GM13977 (cell line): ENCODE measurements at regions of chr20 and their contacts with region 1.

Region 1: GRCh38 chr20:4607287-4607713 is 114.4 kb upstream of the PRND start:
- DNase-seq: peak; percentile 62
- CTCF ChIP-seq: peak; percentile 78

Region 2: GRCh38 chr20:4956200-4956810 is 349.0 kb after region 1 on chr20:
- in situ Hi-C with region 1: loop called (anchors 25 kb)
- DNase-seq: peak; percentile 41
- CTCF ChIP-seq: peak; percentile 55

Region 3: GRCh38 chr20:5078399-5078958 is 471.2 kb after region 1 on chr20:
- in situ Hi-C with region 1: loop called (anchors 25 kb)
- DNase-seq: peak; percentile 84
- CTCF ChIP-seq: no peak